IMR-90 (cell line): ENCODE measurements at regions of chr4 and their contacts with region 1.

Region 1: GRCh38 chr4:145234091-145234706 is 53.8 kb upstream of the OTUD4 start:
- DNase-seq: peak; percentile 67
- ATAC-seq: peak; percentile 93
- H3K4me3 ChIP-seq: no peak overlapping the region
- H3K27ac ChIP-seq: no peak overlapping the region
- H3K4me1 ChIP-seq: 0 out of 2 replicates have a peak, but pooled peaks cover 1% of the 10 kb centered on the region
- H3K27me3 ChIP-seq: no peaks in the 10 kb centered on the region
- CTCF ChIP-seq: peak; percentile 88
- POLR2A ChIP-seq: no peak
- RAD21 ChIP-seq: peak; percentile 83

Region 2: GRCh38 chr4:145186729-145187128 is 47.5 kb before region 1 on chr4:
- CTCF ChIA-PET with region 1: no interaction called
- POLR2A ChIA-PET with region 1: no interaction called
- dilution Hi-C with region 1: no loop called
- in situ Hi-C with region 1: no loop called
- intact Hi-C with region 1: no loop called
- DNase-seq: no peak
- ATAC-seq: no peak
- H3K4me3 ChIP-seq: no peak overlapping the region
- H3K27ac ChIP-seq: no peak overlapping the region
- H3K4me1 ChIP-seq: no peaks in the 10 kb centered on the region
- H3K27me3 ChIP-seq: peaks cover 2% of the 10 kb centered on the region; the same call in 1 of the 2 replicates
- CTCF ChIP-seq: no peak
- POLR2A ChIP-seq: no peak
- RAD21 ChIP-seq: no peak

Region 3: GRCh38 chr4:145315811-145316225 is 81.6 kb after region 1 on chr4:
- CTCF ChIA-PET with region 1: no interaction called
- POLR2A ChIA-PET with region 1: no interaction called
- dilution Hi-C with region 1: no loop called
- in situ Hi-C with region 1: no loop called
- intact Hi-C with region 1: no loop called
- DNase-seq: no peak
- ATAC-seq: no peak
- H3K4me3 ChIP-seq: no peak overlapping the region
- H3K27ac ChIP-seq: no peak overlapping the region
- H3K4me1 ChIP-seq: no peaks in the 10 kb centered on the region
- H3K27me3 ChIP-seq: peaks cover 5% of the 10 kb centered on the region; the same call in 1 of the 2 replicates
- CTCF ChIP-seq: no peak
- POLR2A ChIP-seq: no peak
- RAD21 ChIP-seq: no peak

Region 4: GRCh38 chr4:145552181-145552822 is 318.1 kb after region 1 on chr4:
- CTCF ChIA-PET with region 1: interaction called, 8 read pairs
- POLR2A ChIA-PET with region 1: no interaction called
- dilution Hi-C with region 1: no loop called
- in situ Hi-C with region 1: loop called (anchors 5 kb)
- intact Hi-C with region 1: loop called (anchors 1 kb)
- DNase-seq: no peak
- ATAC-seq: no peak
- H3K4me3 ChIP-seq: no peak overlapping the region
- H3K27ac ChIP-seq: no peak overlapping the region
- H3K4me1 ChIP-seq: no peaks in the 10 kb centered on the region
- H3K27me3 ChIP-seq: no peaks in the 10 kb centered on the region
- CTCF ChIP-seq: no peak
- POLR2A ChIP-seq: no peak
- RAD21 ChIP-seq: no peak

Region 5: DNA sequence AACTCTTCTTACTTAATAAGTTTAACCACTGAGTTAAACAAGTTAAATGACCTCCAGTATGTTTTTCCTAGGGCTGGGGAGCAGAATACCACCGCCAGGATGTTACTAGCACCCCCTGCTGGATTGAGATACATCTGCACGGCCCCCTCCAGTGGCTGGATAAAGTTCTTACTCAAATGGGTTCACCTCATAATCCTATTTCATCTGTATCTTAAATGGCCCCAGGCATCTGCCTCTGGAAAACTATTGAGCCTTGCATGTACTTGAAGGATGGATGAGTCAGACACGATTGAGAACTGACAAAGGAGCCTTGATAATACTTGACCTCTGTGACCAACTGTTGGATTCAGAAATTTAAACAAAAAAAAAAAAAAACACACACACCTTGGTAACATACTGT is 323.5 kb after region 1 on chr4:
- CTCF ChIA-PET with region 1: interaction called, 8 read pairs
- POLR2A ChIA-PET with region 1: no interaction called
- dilution Hi-C with region 1: no loop called
- in situ Hi-C with region 1: loop called (anchors 5 kb)
- intact Hi-C with region 1: loop called (anchors 1 kb)
- DNase-seq: peak; percentile 72
- ATAC-seq: peak; percentile 99
- H3K4me3 ChIP-seq: no peak overlapping the region
- H3K27ac ChIP-seq: no peak overlapping the region
- H3K4me1 ChIP-seq: no peaks in the 10 kb centered on the region
- H3K27me3 ChIP-seq: no peaks in the 10 kb centered on the region
- CTCF ChIP-seq: peak; percentile 99
- POLR2A ChIP-seq: no peak
- RAD21 ChIP-seq: peak; percentile 81

Region 6: GRCh38 chr4:145609481-145610427 is 375.6 kb after region 1 on chr4:
- CTCF ChIA-PET with region 1: interaction called, 6 read pairs
- POLR2A ChIA-PET with region 1: no interaction called
- dilution Hi-C with region 1: no loop called
- in situ Hi-C with region 1: no loop called
- intact Hi-C with region 1: loop called (anchors 1 kb)
- DNase-seq: peak; percentile 77
- ATAC-seq: peak; percentile 85
- H3K4me3 ChIP-seq: no peak overlapping the region
- H3K27ac ChIP-seq: no peak overlapping the region
- H3K4me1 ChIP-seq: no peaks in the 10 kb centered on the region
- H3K27me3 ChIP-seq: 0 out of 2 replicates have a peak, but pooled peaks cover 2% of the 10 kb centered on the region
- CTCF ChIP-seq: peak; percentile 84
- POLR2A ChIP-seq: no peak
- RAD21 ChIP-seq: peak; percentile 83

Region 7: DNA sequence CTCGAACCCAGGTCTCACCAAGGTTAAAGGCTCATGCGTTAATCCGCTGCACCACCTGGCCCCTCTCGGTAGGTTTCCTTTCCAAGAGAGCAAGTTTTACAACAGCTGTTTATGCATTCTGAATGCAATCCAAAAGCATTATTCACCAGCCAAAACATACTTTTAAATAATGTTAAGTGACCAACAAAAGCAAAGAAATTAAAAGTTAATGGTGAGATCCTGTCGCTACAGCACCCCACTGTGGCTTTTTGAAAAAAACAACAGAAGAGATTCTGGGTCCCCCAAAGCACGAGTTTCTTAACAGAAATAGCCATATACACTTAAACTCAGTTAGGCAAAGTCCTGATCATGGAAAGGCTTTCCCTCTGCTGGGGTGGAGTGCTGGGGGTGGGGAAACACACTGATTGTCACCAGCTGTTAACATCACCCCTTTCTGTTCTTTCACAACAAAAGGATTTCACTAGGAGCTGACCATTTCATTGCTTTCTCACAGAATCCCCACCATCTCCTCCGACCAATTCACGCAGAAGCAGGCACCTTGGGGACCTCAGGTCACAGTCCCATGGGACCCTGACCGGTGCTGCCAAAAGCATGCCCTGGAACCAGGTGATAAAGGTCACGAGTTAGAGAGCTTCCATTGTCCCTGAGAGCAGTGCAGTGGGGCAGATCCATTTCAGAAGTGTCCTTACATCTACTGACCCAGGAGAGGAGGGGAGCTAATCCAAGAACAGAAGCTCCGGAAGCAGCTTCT is 653.2 kb after region 1 on chr4:
- CTCF ChIA-PET with region 1: no interaction called
- POLR2A ChIA-PET with region 1: no interaction called
- dilution Hi-C with region 1: no loop called
- in situ Hi-C with region 1: no loop called
- intact Hi-C with region 1: loop called (anchors 5 kb)
- DNase-seq: peak; percentile 75
- ATAC-seq: peak; percentile 82
- H3K4me3 ChIP-seq: no peak overlapping the region
- H3K27ac ChIP-seq: peak overlapping the region; percentile 56; the same call in 1 of the 2 replicates
- H3K4me1 ChIP-seq: peaks cover 6% of the 10 kb centered on the region
- H3K27me3 ChIP-seq: no peaks in the 10 kb centered on the region
- CTCF ChIP-seq: peak; percentile 36
- POLR2A ChIP-seq: no peak
- RAD21 ChIP-seq: peak; percentile 45